GM12878 (cell line): ENCODE measurements at regions of chr1 and their contacts with region 1.

Region 1: GRCh38 chr1:40508375-40509341 is at the start of gene EXO5:
- DNase-seq: peak; percentile 47
- ATAC-seq: peak; percentile 100
- H3K4me3 ChIP-seq: peak within 1 kb of the TSS; percentile 84
- H3K27ac ChIP-seq: peak within 1 kb of the TSS; percentile 57
- H3K4me1 ChIP-seq: no peaks in the 10 kb centered on the region; the same call in none of the 2 replicates
- H3K27me3 ChIP-seq: no peaks in the 10 kb centered on the region
- CTCF ChIP-seq: no peak
- EP300 ChIP-seq: no peak
- POLR2A ChIP-seq: peak; percentile 90
- RAD21 ChIP-seq: no peak
- polyA plus RNA-seq, gene EXO5: 2.1 to 3.7 TPM

Region 2: GRCh38 chr1:40449684-40450494 is 58.8 kb before region 1 on chr1 and contains the start of gene ZFP69B:
- CTCF ChIA-PET with region 1: no interaction called
- POLR2A ChIA-PET with region 1: no interaction called
- RAD21 ChIA-PET with region 1: no interaction called
- SMC1A ChIA-PET with region 1: interaction called, 9 read pairs
- in situ Hi-C with region 1: no loop called
- intact Hi-C with region 1: loop called (anchors 1 kb)
- DNase-seq: peak; percentile 69
- ATAC-seq: peak; percentile 91
- H3K4me3 ChIP-seq: peak within 1 kb of the TSS; percentile 63
- H3K27ac ChIP-seq: peak within 1 kb of the TSS; percentile 83
- H3K4me1 ChIP-seq: no peaks in the 10 kb centered on the region
- H3K27me3 ChIP-seq: no peaks in the 10 kb centered on the region
- CTCF ChIP-seq: peak in 2 of 3 experiments; percentile 11 to 17; a peak in 2 of 6 replicates
- EP300 ChIP-seq: no peak
- POLR2A ChIP-seq: peak; percentile 91
- RAD21 ChIP-seq: no peak
- polyA plus RNA-seq, gene ZFP69B: 1.3 to 1.4 TPM